GM18951 (cell line): ENCODE measurements at regions of chr2 and their contacts with region 1.

Region 1: DNA sequence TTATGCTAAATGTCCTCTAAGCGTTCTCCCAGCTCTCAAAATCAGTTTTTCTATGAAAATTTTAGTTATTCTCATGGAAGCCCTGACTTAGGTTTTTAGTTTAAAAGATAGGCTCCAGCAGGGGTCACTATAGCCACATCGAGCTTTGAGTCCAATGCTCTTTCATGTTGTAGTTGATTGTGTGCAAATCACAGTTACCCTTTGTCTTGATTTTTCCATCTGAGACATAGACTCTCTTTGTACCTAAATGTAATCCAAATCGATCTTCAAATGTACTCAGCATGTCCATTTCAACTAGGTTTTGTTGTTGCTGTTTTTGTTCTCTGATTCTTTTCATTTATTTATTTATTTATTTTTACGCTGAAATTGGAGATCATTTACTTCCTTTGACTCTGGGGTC is 26.4 kb upstream of the MSTN start:
- POLR2A ChIP-seq: no peak

Region 2: GRCh38 chr2:190180313-190181122 is 91.6 kb after region 1 on chr2:
- in situ Hi-C with region 1: loop called (anchors 10 kb)
- POLR2A ChIP-seq: peak; percentile 59

Region 3: DNA sequence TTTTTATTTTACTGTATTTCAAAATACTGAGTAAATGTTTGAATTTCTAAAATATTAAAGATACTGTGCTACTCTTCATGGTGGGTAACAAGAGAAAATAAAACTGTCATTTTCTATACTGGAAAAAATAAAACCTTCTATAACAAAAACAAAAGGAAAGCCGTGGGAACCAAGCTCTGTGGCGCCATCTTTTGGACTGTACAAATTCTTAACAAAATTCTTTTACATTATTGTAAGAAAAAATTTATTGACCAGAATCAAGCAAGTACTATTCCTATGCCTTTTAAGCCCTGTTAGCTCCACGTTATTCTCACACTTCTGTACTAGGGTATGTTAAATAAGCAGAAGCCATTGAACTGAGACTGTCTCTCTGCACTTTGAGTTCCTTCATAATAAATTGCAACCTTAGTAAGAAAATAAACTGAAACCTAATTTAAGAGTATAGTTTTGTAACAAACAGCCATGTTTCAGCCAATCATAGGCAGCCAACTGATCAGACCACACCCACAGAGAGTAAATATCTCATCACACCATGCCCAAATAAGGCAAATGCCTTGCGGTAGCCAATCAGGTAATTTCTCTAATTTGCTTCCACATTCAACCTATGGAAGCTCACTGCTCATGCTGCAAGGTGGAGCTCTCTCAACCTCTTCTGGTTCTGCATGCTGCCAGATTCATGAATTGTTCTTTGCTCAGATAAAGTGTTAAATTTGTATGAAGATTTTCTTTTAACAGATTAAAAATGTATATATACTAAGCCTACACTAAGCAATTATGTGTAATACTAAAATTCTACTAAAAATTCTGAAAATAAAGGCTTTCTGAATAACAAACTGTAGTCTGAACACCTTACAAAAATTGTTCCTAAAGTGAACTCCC is 188.6 kb after region 1 on chr2:
- in situ Hi-C with region 1: loop called (anchors 25 kb)
- POLR2A ChIP-seq: no peak

Region 4: GRCh38 chr2:190369635-190370034 is 280.7 kb after region 1 on chr2:
- in situ Hi-C with region 1: loop called (anchors 5 kb)
- POLR2A ChIP-seq: no peak

Region 5: GRCh38 chr2:190636373-190636772 is 547.5 kb after region 1 on chr2:
- in situ Hi-C with region 1: no loop called
- POLR2A ChIP-seq: no peak

Region 6: DNA sequence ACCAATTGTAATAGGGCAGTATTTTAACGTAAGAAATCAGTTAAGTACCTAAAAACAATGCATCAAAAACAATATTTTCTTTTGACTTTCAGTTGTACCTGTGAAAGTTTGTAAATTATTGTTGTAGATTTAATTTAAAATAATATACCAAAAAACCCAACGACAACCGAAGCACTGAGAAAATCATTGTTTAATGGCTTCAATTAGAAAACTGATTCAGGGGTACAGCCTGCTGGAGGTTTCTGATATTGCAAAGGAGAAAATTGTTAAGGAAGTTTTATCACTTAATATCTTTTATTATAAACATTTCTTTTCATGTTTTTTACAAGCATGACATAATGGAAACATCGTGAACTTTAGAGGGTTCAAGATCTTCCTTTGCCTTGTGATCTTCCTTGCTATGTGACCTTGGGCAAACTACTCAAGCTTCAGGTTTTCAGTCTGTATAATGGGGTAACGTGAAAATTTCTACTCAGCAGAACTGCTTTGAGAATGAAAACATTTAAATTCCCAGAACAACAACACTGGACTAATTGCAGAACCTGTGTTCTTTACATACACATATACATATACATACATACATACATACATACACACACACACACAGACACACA is 715.4 kb after region 1 on chr2:
- in situ Hi-C with region 1: loop called (anchors 25 kb)
- POLR2A ChIP-seq: no peak